ENCODE measurements at regions of chr11 and their contacts with region 1.

Region 1: GRCh38 chr11:67353317-67354074 is at the start of gene POLD4:
- DNase-seq: peak; percentile 98
- ATAC-seq: peak; percentile 54
- H3K4me3 ChIP-seq: peak within 1 kb of the TSS; percentile 77
- H3K27ac ChIP-seq: peak within 1 kb of the TSS; percentile 93
- H3K4me1 ChIP-seq: peaks cover 63% of the 10 kb centered on the region
- H3K27me3 ChIP-seq: no peaks in the 10 kb centered on the region
- CTCF ChIP-seq: no peak
- total RNA-seq, gene POLD4: 78.5 and 81.5 TPM in 2 replicates

Region 2: DNA sequence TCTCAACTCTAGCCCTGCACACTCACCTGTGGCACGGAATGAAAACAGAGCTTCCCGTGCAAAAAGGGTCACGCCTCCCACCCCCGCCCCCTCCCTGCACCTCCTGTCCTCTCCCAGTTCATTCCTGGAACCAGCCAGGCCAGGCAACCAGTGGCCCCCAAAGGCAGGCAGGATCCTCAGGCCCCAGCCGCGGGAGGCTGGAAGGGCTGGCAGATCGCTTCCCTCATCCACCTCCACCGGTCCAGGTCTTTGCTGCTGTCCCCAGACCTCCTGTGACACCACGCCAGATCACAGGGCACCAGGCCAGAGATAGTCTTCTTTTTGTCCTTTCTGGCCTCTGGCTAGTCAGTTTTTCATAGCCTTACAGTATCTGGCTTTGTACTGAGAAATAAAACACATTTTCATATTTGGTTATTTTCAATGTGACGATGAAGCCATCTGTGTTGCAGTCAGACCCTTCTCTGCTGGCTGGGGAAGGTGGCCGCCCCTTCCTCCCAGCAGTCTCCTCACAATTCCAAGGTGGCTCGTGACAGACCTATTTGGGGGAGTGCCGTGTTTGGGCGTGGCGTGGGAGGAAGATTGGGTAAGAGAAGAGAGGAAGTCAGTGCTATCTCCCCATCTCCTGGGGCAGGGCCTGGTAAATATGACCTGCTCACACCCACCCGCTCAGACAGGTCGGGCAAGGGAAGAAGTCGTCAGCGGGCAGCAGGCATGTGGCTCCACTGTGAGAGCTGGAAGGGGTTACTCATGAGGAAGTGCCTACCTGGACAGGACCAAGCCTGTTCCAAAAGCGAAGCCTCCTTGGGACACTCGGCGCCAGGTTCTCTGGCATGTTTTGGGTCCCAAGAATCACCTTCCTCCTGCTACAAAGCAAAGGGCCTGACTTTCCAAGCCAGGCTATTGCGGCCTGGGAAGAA is 41.1 kb before region 1 on chr11:
- CTCF ChIA-PET with region 1: no interaction called
- POLR2A ChIA-PET with region 1: no interaction called
- intact Hi-C with region 1: no loop called
- DNase-seq: peak; percentile 96
- ATAC-seq: peak; percentile 58
- H3K4me3 ChIP-seq: peak overlapping the region; percentile 11; the same call in 1 of the 2 replicates
- H3K27ac ChIP-seq: peak overlapping the region; percentile 95
- H3K4me1 ChIP-seq: peaks cover 23% of the 10 kb centered on the region
- H3K27me3 ChIP-seq: no peaks in the 10 kb centered on the region
- CTCF ChIP-seq: no peak

Region 3: GRCh38 chr11:67382276-67383136 is 29.0 kb after region 1 on chr11:
- CTCF ChIA-PET with region 1: interaction called, 46 read pairs
- POLR2A ChIA-PET with region 1: interaction called, 14 read pairs
- intact Hi-C with region 1: loop called (anchors 1 kb)
- DNase-seq: peak; percentile 93
- ATAC-seq: peak; percentile 51
- H3K4me3 ChIP-seq: no peak overlapping the region
- H3K27ac ChIP-seq: no peak overlapping the region
- H3K4me1 ChIP-seq: peaks cover 58% of the 10 kb centered on the region
- H3K27me3 ChIP-seq: no peaks in the 10 kb centered on the region
- CTCF ChIP-seq: peak; percentile 99

Region 4: GRCh38 chr11:67391304-67392132 is 38.0 kb after region 1 on chr11 and contains the start of gene RAD9A:
- CTCF ChIA-PET with region 1: interaction called, 4 read pairs
- POLR2A ChIA-PET with region 1: interaction called, 12 read pairs
- intact Hi-C with region 1: no loop called
- DNase-seq: peak; percentile 97
- ATAC-seq: peak; percentile 66
- H3K4me3 ChIP-seq: peak within 1 kb of the TSS; percentile 81
- H3K27ac ChIP-seq: peak within 1 kb of the TSS; percentile 81
- H3K4me1 ChIP-seq: peaks cover 8% of the 10 kb centered on the region; the same call in 1 of the 2 replicates
- H3K27me3 ChIP-seq: no peaks in the 10 kb centered on the region
- CTCF ChIP-seq: no peak
- total RNA-seq, gene RAD9A: 45.5 and 48.9 TPM in 2 replicates